IMR-90 (cell line): ENCODE measurements at regions of chr4 and their contacts with region 1.

Region 1: GRCh38 chr4:26670903-26671537 is 87.1 kb downstream of the TBC1D19 start:
- DNase-seq: no peak
- ATAC-seq: no peak
- H3K4me3 ChIP-seq: no peak overlapping the region
- H3K27ac ChIP-seq: no peak overlapping the region
- H3K4me1 ChIP-seq: no peaks in the 10 kb centered on the region
- H3K27me3 ChIP-seq: no peaks in the 10 kb centered on the region
- CTCF ChIP-seq: no peak
- POLR2A ChIP-seq: no peak
- RAD21 ChIP-seq: no peak

Region 2: GRCh38 chr4:26685250-26685649 is 14.2 kb after region 1 on chr4:
- CTCF ChIA-PET with region 1: no interaction called
- POLR2A ChIA-PET with region 1: no interaction called
- dilution Hi-C with region 1: no loop called
- in situ Hi-C with region 1: no loop called
- intact Hi-C with region 1: loop called (anchors 2 kb)
- DNase-seq: peak; percentile 29
- ATAC-seq: no peak; the same call in 1 of the 2 replicates
- H3K4me3 ChIP-seq: no peak overlapping the region
- H3K27ac ChIP-seq: no peak overlapping the region
- H3K4me1 ChIP-seq: peaks cover 3% of the 10 kb centered on the region; the same call in 1 of the 2 replicates
- H3K27me3 ChIP-seq: no peaks in the 10 kb centered on the region
- CTCF ChIP-seq: no peak
- POLR2A ChIP-seq: no peak
- RAD21 ChIP-seq: no peak